ENCODE measurements at regions of chr18 and their contacts with region 1.

Region 1: GRCh38 chr18:12838178-12838634 is 45.8 kb downstream of the PTPN2 start:
- DNase-seq: peak in 1 of 5 donors; percentile 7
- H3K4me3 ChIP-seq: no peak overlapping the region
- H3K4me3 Mint-ChIP-seq: peak overlapping the region; percentile 36 to 83 (median 78)
- H3K27ac ChIP-seq: peak overlapping the region; percentile 51
- H3K27ac Mint-ChIP-seq: peak overlapping the region; percentile 81 to 94 (median 87)
- H3K4me1 ChIP-seq: peaks cover 57% of the 10 kb centered on the region
- H3K4me1 Mint-ChIP-seq: peaks cover 43 to 66% (median 55%) of the 10 kb centered on the region in 4 donors
- H3K27me3 ChIP-seq: no peaks in the 10 kb centered on the region
- H3K27me3 Mint-ChIP-seq: no peaks in the 10 kb centered on the region

Region 2: GRCh38 chr18:12777500-12777944 is 60.7 kb before region 1 on chr18:
- CTCF ChIA-PET with region 1: interaction called, 3 read pairs
- POLR2A ChIA-PET with region 1: interaction called, 16 read pairs
- intact Hi-C with region 1: no loop called
- DNase-seq: no peak
- H3K4me3 ChIP-seq: no peak overlapping the region
- H3K4me3 Mint-ChIP-seq: peak overlapping the region in 1 of 8 donors; percentile 74
- H3K27ac ChIP-seq: no peak overlapping the region
- H3K27ac Mint-ChIP-seq: no peak overlapping the region
- H3K4me1 ChIP-seq: peaks cover 5% of the 10 kb centered on the region
- H3K4me1 Mint-ChIP-seq: peaks cover 3 to 17% (median 10%) of the 10 kb centered on the region in 4 donors
- H3K27me3 ChIP-seq: no peaks in the 10 kb centered on the region
- H3K27me3 Mint-ChIP-seq: no peaks in the 10 kb centered on the region

Region 3: DNA sequence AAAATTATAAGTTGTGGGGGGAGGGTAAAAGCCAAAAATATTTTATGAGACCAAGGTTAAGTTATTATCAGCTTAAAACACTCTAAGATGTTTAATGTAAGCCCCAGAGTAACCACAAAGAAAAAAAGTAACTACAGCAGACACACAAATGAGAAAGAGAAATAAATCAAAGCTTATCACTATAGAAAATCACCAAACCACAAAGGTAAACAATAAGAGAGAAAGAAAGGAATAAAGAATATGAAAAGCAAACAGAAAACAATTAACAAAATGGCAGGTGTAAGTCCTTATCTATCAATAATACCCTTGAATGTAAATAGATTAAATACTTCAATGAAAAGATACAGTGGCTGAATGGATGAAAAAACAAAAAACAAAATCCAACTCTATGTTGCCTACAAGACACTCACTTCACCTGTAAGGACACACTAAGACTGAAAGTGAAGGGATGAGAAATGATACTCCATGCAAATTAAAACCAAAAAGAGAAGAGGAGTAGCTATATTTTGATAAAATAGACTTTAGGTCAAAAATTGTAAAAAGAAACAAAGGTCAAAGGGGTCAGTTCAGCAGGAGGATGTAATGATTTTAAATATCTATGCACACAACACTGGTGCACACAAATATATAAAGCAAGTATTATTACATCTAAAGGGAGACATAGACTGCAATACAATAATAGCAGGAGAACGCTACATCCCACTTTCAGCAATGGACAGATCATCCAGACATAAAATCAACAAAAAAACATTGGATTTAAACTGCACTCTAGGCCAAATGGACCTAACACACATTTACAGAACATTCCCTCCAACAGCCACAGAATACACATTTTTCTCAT is 34.9 kb before region 1 on chr18:
- CTCF ChIA-PET with region 1: no interaction called
- POLR2A ChIA-PET with region 1: no interaction called
- intact Hi-C with region 1: loop called (anchors 5 kb)
- DNase-seq: no peak
- H3K4me3 ChIP-seq: no peak overlapping the region
- H3K4me3 Mint-ChIP-seq: peak overlapping the region in 4 of 8 donors; percentile 11 to 46 (median 18)
- H3K27ac ChIP-seq: no peak overlapping the region
- H3K27ac Mint-ChIP-seq: peak overlapping the region in 5 of 7 donors; percentile 9 to 54 (median 29)
- H3K4me1 ChIP-seq: peaks cover 13% of the 10 kb centered on the region
- H3K4me1 Mint-ChIP-seq: peaks cover 15 to 25% (median 17%) of the 10 kb centered on the region in 4 donors
- H3K27me3 ChIP-seq: no peaks in the 10 kb centered on the region
- H3K27me3 Mint-ChIP-seq: no peaks in the 10 kb centered on the region

Measured in CD4-positive, alpha-beta memory T cell (primary cell).